ENCODE measurements at regions of chr15 and their contacts with region 1.

Region 1: DNA sequence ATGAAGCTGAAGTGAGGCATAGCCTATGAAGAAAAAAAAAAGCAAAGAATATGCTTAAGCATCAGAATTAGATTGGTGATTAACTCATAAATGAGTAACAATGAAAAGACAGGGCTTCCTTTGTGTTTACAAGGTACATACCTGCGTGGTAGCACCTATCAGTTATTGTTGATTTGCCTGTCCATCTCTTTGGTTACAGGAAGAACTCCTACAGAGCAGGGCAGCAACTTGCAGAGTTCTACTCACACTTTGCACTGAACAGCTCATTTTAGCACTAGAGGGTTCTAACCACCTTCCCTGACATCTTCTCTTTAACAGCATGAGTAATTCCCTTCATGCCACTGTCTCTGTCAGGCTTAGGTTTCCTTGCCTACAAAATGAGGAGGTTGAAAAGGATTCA is 166.0 kb downstream of the DPH6 start:
- DNase-seq: no peak
- H3K4me3 ChIP-seq: no peak overlapping the region
- H3K27ac ChIP-seq: no peak overlapping the region
- H3K4me1 ChIP-seq: no peaks in the 10 kb centered on the region
- H3K27me3 ChIP-seq: no peaks in the 10 kb centered on the region
- CTCF ChIP-seq: no peak
- POLR2A ChIP-seq: no peak

Region 2: DNA sequence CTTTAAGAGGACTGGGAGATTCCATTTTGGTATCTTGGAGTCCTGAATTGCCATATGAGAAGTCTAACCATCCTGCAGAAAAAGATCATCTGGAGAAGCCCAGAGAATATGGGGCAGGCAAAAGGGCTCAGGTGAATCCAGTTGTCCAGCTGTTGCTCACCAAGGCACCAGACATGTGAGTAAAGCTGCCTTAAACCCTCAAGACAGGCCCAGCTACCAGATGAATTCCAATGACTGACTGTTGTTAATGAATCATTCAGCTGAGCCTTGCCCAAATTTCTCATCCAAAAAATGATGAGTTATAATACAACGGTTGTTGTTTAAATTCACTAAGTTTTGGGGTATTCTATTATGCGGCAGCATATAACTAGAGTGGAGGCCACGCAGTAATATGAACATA is 272.9 kb before region 1 on chr15:
- intact Hi-C with region 1: no loop called
- DNase-seq: no peak
- H3K4me3 ChIP-seq: no peak overlapping the region
- H3K27ac ChIP-seq: no peak overlapping the region
- H3K4me1 ChIP-seq: no peaks in the 10 kb centered on the region
- H3K27me3 ChIP-seq: no peaks in the 10 kb centered on the region
- CTCF ChIP-seq: no peak
- POLR2A ChIP-seq: no peak

Region 3: GRCh38 chr15:36024031-36024688 is 644.2 kb after region 1 on chr15:
- intact Hi-C with region 1: loop called (anchors 5 kb)
- DNase-seq: no peak
- H3K4me3 ChIP-seq: no peak overlapping the region
- H3K27ac ChIP-seq: no peak overlapping the region
- H3K4me1 ChIP-seq: no peaks in the 10 kb centered on the region
- H3K27me3 ChIP-seq: no peaks in the 10 kb centered on the region
- CTCF ChIP-seq: no peak
- POLR2A ChIP-seq: no peak

Measured in vagina (tissue), 2 donors.